Esophagus muscularis mucosa (tissue), 4 donors: ENCODE measurements at regions of chr1 and their contacts with region 1.

Region 1: GRCh38 chr1:222805858-222806257 is 9.0 kb upstream of the DISP1 start:
- DNase-seq: no peak
- H3K4me3 ChIP-seq: no peak overlapping the region
- H3K27ac ChIP-seq: no peak overlapping the region
- H3K4me1 ChIP-seq: no peaks in the 10 kb centered on the region
- H3K27me3 ChIP-seq: no peaks in the 10 kb centered on the region
- CTCF ChIP-seq: no peak
- EP300 ChIP-seq: no peak
- POLR2A ChIP-seq: no peak

Region 2: DNA sequence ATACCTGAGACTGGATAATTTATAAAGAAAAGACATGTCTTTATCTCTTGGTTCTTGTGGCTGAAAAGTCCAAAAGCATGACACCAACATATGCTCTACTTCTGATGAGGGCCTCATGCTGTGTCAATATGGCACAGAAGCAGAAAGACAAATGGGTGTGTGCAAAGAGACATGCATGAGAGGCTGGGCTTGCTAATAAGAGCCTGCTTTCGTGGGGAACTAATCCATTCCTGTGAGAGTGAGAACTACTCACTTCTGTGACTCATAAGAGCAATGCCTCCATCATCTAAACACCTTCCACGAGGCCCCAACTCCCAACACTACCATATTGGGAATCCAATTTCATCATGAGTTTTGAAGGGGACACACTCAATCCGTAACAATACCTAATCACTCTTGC is 724.0 kb before region 1 on chr1:
- intact Hi-C with region 1: no loop called
- DNase-seq: peak; percentile 50
- H3K4me3 ChIP-seq: no peak overlapping the region
- H3K27ac ChIP-seq: no peak overlapping the region
- H3K4me1 ChIP-seq: peaks cover 0 to 15% (median 6%) of the 10 kb centered on the region in 4 donors
- H3K27me3 ChIP-seq: no peaks in the 10 kb centered on the region
- CTCF ChIP-seq: no peak
- EP300 ChIP-seq: no peak
- POLR2A ChIP-seq: no peak

Region 3: GRCh38 chr1:222521299-222522104 is 284.4 kb before region 1 on chr1:
- intact Hi-C with region 1: no loop called
- DNase-seq: no peak
- H3K4me3 ChIP-seq: no peak overlapping the region
- H3K27ac ChIP-seq: no peak overlapping the region
- H3K4me1 ChIP-seq: no peaks in the 10 kb centered on the region
- H3K27me3 ChIP-seq: peaks cover 0 to 6% (median 0%) of the 10 kb centered on the region in 4 donors
- CTCF ChIP-seq: no peak
- EP300 ChIP-seq: no peak
- POLR2A ChIP-seq: no peak

Region 4: GRCh38 chr1:222754366-222755139 is 51.3 kb before region 1 on chr1:
- intact Hi-C with region 1: no loop called
- DNase-seq: no peak
- H3K4me3 ChIP-seq: no peak overlapping the region
- H3K27ac ChIP-seq: peak overlapping the region in 2 of 4 donors; percentile 33 to 44
- H3K4me1 ChIP-seq: peaks cover 0 to 6% (median 0%) of the 10 kb centered on the region in 4 donors
- H3K27me3 ChIP-seq: no peaks in the 10 kb centered on the region
- CTCF ChIP-seq: no peak
- EP300 ChIP-seq: no peak
- POLR2A ChIP-seq: no peak

Region 5: GRCh38 chr1:222772996-222773379 is 32.9 kb before region 1 on chr1:
- intact Hi-C with region 1: no loop called
- DNase-seq: no peak
- H3K4me3 ChIP-seq: no peak overlapping the region
- H3K27ac ChIP-seq: peak overlapping the region; percentile 11 to 53 (median 30)
- H3K4me1 ChIP-seq: peaks cover 0 to 5% (median under 1%) of the 10 kb centered on the region in 4 donors
- H3K27me3 ChIP-seq: no peaks in the 10 kb centered on the region
- CTCF ChIP-seq: no peak
- EP300 ChIP-seq: no peak
- POLR2A ChIP-seq: no peak

Region 6: DNA sequence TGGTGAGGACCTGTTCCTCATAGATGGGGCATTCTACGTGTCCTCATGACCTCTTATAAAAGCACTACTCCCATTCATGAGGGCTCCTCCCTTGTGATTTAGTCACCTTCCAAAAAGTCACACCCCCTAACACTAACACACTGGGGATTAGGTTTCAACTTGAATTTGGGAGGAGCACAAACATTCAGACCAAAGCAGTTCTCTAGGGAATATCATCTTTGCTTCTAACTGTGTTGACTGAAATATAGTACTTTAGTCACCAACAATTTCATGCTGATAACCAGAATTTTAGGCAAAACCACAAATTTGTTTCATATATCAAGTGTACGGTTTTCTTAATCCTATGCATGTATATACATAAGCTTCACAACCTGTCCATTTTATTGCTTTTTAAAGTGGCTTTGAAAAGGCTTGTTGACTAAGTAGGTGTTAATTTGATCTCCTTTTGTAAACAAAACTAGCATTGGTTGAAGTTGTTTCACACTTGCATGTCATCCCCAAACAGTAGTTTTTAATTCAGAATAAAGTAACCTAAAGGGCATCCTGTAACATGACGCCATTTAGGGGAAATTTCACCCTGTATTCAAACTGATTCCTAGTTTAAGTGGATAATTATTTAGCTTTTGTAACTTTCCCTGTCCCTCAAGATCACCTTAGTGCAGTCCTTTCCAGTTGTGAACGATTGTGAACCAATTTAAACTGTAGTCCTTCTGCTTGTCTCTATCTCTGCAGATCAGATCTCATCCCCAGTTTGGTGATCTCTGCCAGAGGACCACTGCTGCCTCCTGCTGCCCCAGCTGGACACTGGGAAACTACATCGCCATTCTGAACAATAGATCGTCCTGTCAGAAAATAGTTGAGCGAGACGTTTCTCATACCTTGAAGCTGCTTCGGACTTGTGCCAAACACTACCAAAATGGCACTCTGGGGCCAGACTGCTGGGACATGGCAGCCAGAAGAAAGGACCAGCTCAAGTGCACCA is 196.1 kb after region 1 on chr1:
- intact Hi-C with region 1: loop called (anchors 10 kb)
- DNase-seq: no peak
- H3K4me3 ChIP-seq: no peak overlapping the region
- H3K27ac ChIP-seq: no peak overlapping the region
- H3K4me1 ChIP-seq: peaks cover 3 to 15% (median 10%) of the 10 kb centered on the region in 4 donors
- H3K27me3 ChIP-seq: no peaks in the 10 kb centered on the region
- CTCF ChIP-seq: peak; percentile 9 to 32 (median 10)
- EP300 ChIP-seq: no peak
- POLR2A ChIP-seq: no peak